ENCODE measurements at regions of chr4 and their contacts with region 1.

Region 1: GRCh38 chr4:55546756-55547465 is at the start of gene CLOCK:
- DNase-seq: peak; percentile 79 to 87 (median 83)
- ATAC-seq: peak; percentile 82
- H3K4me3 ChIP-seq: peak within 1 kb of the TSS; percentile 82
- H3K4me3 Mint-ChIP-seq: peak within 1 kb of the TSS; percentile 88 to 96 (median 94)
- H3K27ac ChIP-seq: peak within 1 kb of the TSS; percentile 84
- H3K27ac Mint-ChIP-seq: peak within 1 kb of the TSS; percentile 87 to 92 (median 90)
- H3K4me1 ChIP-seq: peaks cover 5 to 8% of the 10 kb centered on the region in 2 donors
- H3K4me1 Mint-ChIP-seq: peaks cover 21 to 57% (median 40%) of the 10 kb centered on the region in 7 donors
- H3K27me3 ChIP-seq: no peaks in the 10 kb centered on the region
- H3K27me3 Mint-ChIP-seq: peaks cover 0 to 29% (median 0%) of the 10 kb centered on the region in 5 donors
- total RNA-seq, gene CLOCK: 7.9 to 12.6 (median 8.9) TPM

Region 2: DNA sequence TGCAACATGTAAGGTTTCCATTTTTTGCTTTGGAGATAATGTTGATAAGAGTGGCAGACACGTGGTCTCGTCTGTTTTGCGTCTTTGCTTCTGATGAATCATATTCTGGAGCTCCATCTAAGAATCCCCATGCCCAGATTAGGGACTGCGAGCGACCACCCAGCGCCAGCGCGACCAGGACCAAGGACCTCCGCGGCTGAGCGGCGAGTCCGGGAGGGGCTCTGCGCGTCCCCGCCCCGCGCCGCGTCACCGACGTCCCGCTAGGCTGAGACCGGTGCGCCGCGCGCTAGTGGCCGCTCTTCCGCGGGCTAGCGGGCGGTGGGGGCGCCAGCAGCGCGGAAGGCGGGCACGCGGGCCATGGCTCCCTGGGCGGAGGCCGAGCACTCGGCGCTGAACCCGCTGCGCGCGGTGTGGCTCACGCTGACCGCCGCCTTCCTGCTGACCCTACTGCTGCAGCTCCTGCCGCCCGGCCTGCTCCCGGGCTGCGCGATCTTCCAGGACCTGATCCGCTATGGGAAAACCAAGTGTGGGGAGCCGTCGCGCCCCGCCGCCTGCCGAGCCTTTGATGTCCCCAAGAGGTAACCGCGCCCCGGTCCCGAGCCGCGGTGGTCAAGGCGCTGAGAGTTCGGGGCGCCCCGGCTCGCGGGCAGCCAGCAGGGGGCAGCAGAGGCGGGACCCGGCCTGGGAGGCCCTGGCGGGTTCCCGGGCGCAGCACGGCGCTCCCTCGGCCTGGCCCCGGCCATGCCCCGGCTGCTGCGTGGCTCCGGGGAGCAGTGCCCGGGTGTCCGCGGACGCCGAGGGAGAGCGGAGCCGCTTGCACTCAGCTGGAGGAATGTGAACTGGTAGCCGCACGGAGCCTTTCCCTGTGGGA is 200.7 kb before region 1 on chr4 and contains the start of gene SRD5A3:
- CTCF ChIA-PET with region 1: interaction called, 5 read pairs
- POLR2A ChIA-PET with region 1: interaction called, 14 read pairs
- intact Hi-C with region 1: loop called (anchors 1 to 2 kb)
- DNase-seq: peak; percentile 53 to 92 (median 72)
- ATAC-seq: peak; percentile 97
- H3K4me3 ChIP-seq: peak within 1 kb of the TSS; percentile 79
- H3K4me3 Mint-ChIP-seq: peak within 1 kb of the TSS; percentile 83 to 94 (median 90)
- H3K27ac ChIP-seq: peak within 1 kb of the TSS; percentile 69
- H3K27ac Mint-ChIP-seq: peak within 1 kb of the TSS; percentile 70 to 91 (median 87)
- H3K4me1 ChIP-seq: peaks cover 6 to 8% of the 10 kb centered on the region in 2 donors
- H3K4me1 Mint-ChIP-seq: peaks cover 8 to 23% (median 19%) of the 10 kb centered on the region in 7 donors
- H3K27me3 ChIP-seq: no peaks in the 10 kb centered on the region
- H3K27me3 Mint-ChIP-seq: no peaks in the 10 kb centered on the region
- total RNA-seq, gene SRD5A3: 1.9 to 8.5 (median 4.5) TPM

Region 3: DNA sequence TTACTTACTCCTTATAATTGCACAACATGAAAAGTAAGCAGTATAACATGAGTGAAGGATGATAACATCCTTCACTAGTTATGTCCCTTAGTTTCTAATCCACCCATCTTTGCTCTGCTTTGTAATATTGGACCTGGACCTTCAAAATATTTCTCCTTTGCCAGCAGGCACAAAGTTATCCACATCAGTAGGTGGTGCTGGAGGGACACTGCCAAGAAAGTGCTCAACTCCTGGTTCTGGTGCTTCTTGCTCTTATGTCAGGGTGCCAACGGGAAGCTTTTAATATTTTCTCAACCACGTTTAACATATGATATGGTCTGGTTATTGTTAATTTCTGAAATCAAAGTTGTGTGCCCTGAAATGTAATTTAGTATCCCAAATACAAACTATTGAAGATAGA is 102.1 kb before region 1 on chr4:
- CTCF ChIA-PET with region 1: interaction called, 4 read pairs
- POLR2A ChIA-PET with region 1: interaction called, 5 read pairs
- intact Hi-C with region 1: loop called in 1 of 2 experiments (anchors 2 kb)
- DNase-seq: peak in 1 of 9 donors; percentile 7
- ATAC-seq: no peak
- H3K4me3 ChIP-seq: no peak overlapping the region
- H3K4me3 Mint-ChIP-seq: no peak overlapping the region
- H3K27ac ChIP-seq: no peak overlapping the region
- H3K27ac Mint-ChIP-seq: peak overlapping the region in 1 of 9 donors; percentile 51
- H3K4me1 ChIP-seq: no peaks in the 10 kb centered on the region
- H3K4me1 Mint-ChIP-seq: peaks cover 0 to 15% (median 11%) of the 10 kb centered on the region in 7 donors
- H3K27me3 ChIP-seq: no peaks in the 10 kb centered on the region
- H3K27me3 Mint-ChIP-seq: no peaks in the 10 kb centered on the region

Region 4: DNA sequence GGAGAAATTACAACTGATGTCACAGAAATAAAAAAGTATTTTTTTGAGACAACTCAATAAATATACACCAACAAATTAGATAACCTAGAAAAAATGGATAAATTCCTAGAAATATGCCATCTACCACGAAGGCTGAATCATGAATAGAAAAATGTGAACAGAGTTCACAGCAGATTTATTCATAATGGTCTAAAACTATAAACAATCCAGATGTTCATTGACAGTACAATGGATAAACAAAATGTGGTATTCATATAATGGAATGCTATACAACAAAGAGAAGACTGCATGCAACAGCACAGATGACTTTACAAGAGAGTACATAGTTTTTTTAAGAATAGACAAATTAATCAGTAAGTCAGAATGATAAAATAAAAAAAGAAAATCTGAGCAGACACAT is 55.4 kb before region 1 on chr4:
- CTCF ChIA-PET with region 1: no interaction called
- POLR2A ChIA-PET with region 1: no interaction called
- intact Hi-C with region 1: loop called in 1 of 2 experiments (anchors 5 kb)
- DNase-seq: no peak
- ATAC-seq: no peak
- H3K4me3 ChIP-seq: no peak overlapping the region
- H3K4me3 Mint-ChIP-seq: no peak overlapping the region
- H3K27ac ChIP-seq: no peak overlapping the region
- H3K27ac Mint-ChIP-seq: no peak overlapping the region
- H3K4me1 ChIP-seq: no peaks in the 10 kb centered on the region
- H3K4me1 Mint-ChIP-seq: peaks cover 0 to 23% (median 15%) of the 10 kb centered on the region in 7 donors
- H3K27me3 ChIP-seq: no peaks in the 10 kb centered on the region
- H3K27me3 Mint-ChIP-seq: no peaks in the 10 kb centered on the region

Measured in naive thymus-derived CD4-positive, alpha-beta T cell (primary cell).